HCT116 (cell line): ENCODE measurements at regions of chr11 and their contacts with region 1.

Region 1: GRCh38 chr11:45655347-45655756 is 10.1 kb downstream of the CHST1 start:
- DNase-seq: peak; percentile 53
- ATAC-seq: peak; percentile 94
- H3K4me3 ChIP-seq: no peak overlapping the region
- H3K27ac ChIP-seq: no peak overlapping the region
- H3K4me1 ChIP-seq: peaks cover 0 to 3% of the 10 kb centered on the region in 2 experiments; a peak in 1 of 4 replicates
- H3K27me3 ChIP-seq: no peaks in the 10 kb centered on the region
- CTCF ChIP-seq: peak; percentile 73 to 98 (median 90)
- POLR2A ChIP-seq: no peak
- RAD21 ChIP-seq: peak; percentile 75

Region 2: GRCh38 chr11:45371251-45372115 is 283.9 kb before region 1 on chr11:
- CTCF ChIA-PET with region 1: interaction called, 48 read pairs
- POLR2A ChIA-PET with region 1: no interaction called
- RAD21 ChIA-PET with region 1: interaction called, 5 to 7 read pairs
- intact Hi-C with region 1: loop called (anchors 1 kb)
- DNase-seq: peak; percentile 63
- ATAC-seq: peak; percentile 97
- H3K4me3 ChIP-seq: no peak overlapping the region
- H3K27ac ChIP-seq: no peak overlapping the region
- H3K4me1 ChIP-seq: peaks cover 4 to 5% of the 10 kb centered on the region in 2 experiments; a peak in 2 of 4 replicates
- H3K27me3 ChIP-seq: peaks cover 15% of the 10 kb centered on the region; the same call in 1 of the 2 replicates
- CTCF ChIP-seq: peak; percentile 81 to 97 (median 96)
- POLR2A ChIP-seq: no peak
- RAD21 ChIP-seq: peak; percentile 92

Region 3: DNA sequence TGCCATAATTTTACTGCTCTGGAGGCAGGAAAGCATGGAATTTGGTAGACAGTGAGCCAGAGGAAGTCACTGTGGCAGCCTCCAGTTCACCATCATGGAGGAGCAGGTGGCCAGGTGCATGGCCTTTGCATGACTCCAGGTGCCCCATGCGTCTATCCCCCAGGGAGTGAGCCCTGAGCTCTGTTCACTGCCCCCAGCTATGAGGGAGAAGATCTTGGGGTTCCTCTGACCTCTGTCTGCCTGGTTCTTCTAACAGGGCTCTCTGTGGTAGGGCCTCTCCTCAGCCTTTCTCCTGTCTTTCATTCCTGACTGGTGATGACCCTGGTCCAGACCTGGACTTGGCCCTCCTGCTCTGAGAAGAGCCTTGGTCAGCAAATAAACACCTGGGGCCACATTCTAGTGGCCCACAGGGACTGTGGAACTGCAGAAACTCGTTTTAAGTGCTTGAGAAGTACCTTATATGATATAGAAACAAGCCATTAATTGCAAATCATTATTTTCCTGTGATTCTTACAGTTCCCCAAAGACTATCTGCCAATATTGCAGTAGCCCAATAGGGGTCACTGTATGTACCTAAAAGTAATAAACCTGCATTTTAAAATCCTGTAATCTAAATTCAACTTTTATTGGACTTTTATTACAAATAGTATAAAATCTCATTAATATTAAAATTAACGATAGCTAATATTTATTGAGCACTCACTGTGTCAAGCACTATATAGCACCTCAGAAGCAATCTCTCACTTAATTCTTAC is 249.3 kb before region 1 on chr11:
- CTCF ChIA-PET with region 1: interaction called, 7 read pairs
- POLR2A ChIA-PET with region 1: no interaction called
- RAD21 ChIA-PET with region 1: no interaction called
- intact Hi-C with region 1: loop called (anchors 10 kb)
- DNase-seq: no peak
- ATAC-seq: 0 out of 2 replicates have a peak, but pooled peaks have one; percentile 44
- H3K4me3 ChIP-seq: no peak overlapping the region
- H3K27ac ChIP-seq: no peak overlapping the region
- H3K4me1 ChIP-seq: no peaks in the 10 kb centered on the region
- H3K27me3 ChIP-seq: peaks cover 56% of the 10 kb centered on the region
- CTCF ChIP-seq: peak; percentile 32 to 58 (median 55); a peak in 5 of 6 replicates
- POLR2A ChIP-seq: no peak
- RAD21 ChIP-seq: peak; percentile 42; the same call in 1 of the 2 replicates

Region 4: GRCh38 chr11:45666648-45667642 is 11.6 kb after region 1 on chr11:
- CTCF ChIA-PET with region 1: interaction called, 12 read pairs
- POLR2A ChIA-PET with region 1: no interaction called
- RAD21 ChIA-PET with region 1: no interaction called
- intact Hi-C with region 1: no loop called
- DNase-seq: no peak
- ATAC-seq: no peak
- H3K4me3 ChIP-seq: no peak overlapping the region
- H3K27ac ChIP-seq: no peak overlapping the region
- H3K4me1 ChIP-seq: peaks cover 3 to 18% of the 10 kb centered on the region in 2 experiments; a peak in 2 of 4 replicates
- H3K27me3 ChIP-seq: peaks cover 6% of the 10 kb centered on the region; the same call in 1 of the 2 replicates
- CTCF ChIP-seq: no peak
- POLR2A ChIP-seq: no peak
- RAD21 ChIP-seq: no peak